PC-3 (cell line): ENCODE measurements at regions of chr7 and their contacts with region 1.

Region 1: GRCh38 chr7:11831736-11832495 is at the start of gene THSD7A:
- DNase-seq: peak; percentile 56
- ATAC-seq: peak; percentile 95
- H3K4me3 ChIP-seq: peak within 1 kb of the TSS; percentile 76
- H3K27ac ChIP-seq: no peak within 1 kb of the TSS
- H3K4me1 ChIP-seq: no peaks in the 10 kb centered on the region
- H3K27me3 ChIP-seq: no peaks in the 10 kb centered on the region
- CTCF ChIP-seq: no peak
- total RNA-seq, gene THSD7A: 0.04 and 0.06 TPM in 2 replicates

Region 2: GRCh38 chr7:11427686-11428273 is 404.1 kb before region 1 on chr7:
- CTCF ChIA-PET with region 1: interaction called, 4 read pairs
- POLR2A ChIA-PET with region 1: no interaction called
- intact Hi-C with region 1: loop called (anchors 1 kb)
- DNase-seq: peak; percentile 74
- ATAC-seq: peak; percentile 62
- H3K4me3 ChIP-seq: no peak overlapping the region
- H3K27ac ChIP-seq: no peak overlapping the region
- H3K4me1 ChIP-seq: no peaks in the 10 kb centered on the region
- H3K27me3 ChIP-seq: no peaks in the 10 kb centered on the region
- CTCF ChIP-seq: peak; percentile 87

Region 3: DNA sequence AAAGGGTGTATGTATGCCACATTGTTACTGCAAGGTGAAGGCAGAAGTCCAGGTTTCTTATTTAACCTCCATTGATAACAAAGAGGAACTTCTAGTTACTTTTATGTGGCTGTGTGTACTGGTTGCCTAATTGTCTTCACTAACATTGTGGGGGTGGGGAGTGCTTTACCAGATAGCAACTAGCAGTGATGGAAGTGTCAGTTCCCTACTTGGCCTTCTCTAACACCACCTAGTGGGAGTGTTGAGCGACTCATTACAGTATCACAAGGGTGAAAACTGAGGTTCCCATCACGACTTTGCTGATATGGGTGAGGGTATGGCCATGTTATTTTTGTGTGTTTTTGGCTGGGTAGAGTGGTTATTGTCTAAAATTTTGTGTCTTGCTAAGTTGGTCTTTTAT is 274.3 kb before region 1 on chr7:
- CTCF ChIA-PET with region 1: no interaction called
- POLR2A ChIA-PET with region 1: no interaction called
- intact Hi-C with region 1: loop called (anchors 5 kb)
- DNase-seq: peak; percentile 48
- ATAC-seq: peak; percentile 96
- H3K4me3 ChIP-seq: no peak overlapping the region
- H3K27ac ChIP-seq: no peak overlapping the region
- H3K4me1 ChIP-seq: no peaks in the 10 kb centered on the region
- H3K27me3 ChIP-seq: no peaks in the 10 kb centered on the region
- CTCF ChIP-seq: peak; percentile 53

Region 4: GRCh38 chr7:11817111-11817740 is 14.7 kb before region 1 on chr7:
- CTCF ChIA-PET with region 1: no interaction called
- POLR2A ChIA-PET with region 1: no interaction called
- intact Hi-C with region 1: no loop called
- DNase-seq: no peak
- ATAC-seq: no peak
- H3K4me3 ChIP-seq: no peak overlapping the region
- H3K27ac ChIP-seq: no peak overlapping the region
- H3K4me1 ChIP-seq: no peaks in the 10 kb centered on the region
- H3K27me3 ChIP-seq: no peaks in the 10 kb centered on the region
- CTCF ChIP-seq: no peak

Region 5: DNA sequence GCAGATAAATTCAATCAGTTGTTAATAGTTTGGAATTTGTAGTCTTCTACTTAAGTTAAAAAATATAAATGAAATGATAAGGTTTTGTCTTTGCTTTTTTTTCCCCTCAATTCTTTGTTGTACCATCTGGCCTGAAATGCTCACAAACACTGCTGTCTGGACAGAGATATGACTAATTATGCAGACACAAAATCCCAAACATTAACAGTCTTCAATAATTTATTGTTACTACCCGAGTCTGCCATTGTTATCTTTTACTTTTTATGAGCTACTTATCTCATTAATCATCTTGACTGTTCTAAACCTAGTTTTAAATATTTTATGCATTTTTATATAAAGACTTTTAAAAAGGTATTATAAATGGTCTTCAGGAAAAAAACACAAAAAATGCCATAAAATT is 64.7 kb after region 1 on chr7:
- CTCF ChIA-PET with region 1: no interaction called
- POLR2A ChIA-PET with region 1: no interaction called
- intact Hi-C with region 1: no loop called
- DNase-seq: no peak
- ATAC-seq: peak; percentile 70
- H3K4me3 ChIP-seq: no peak overlapping the region
- H3K27ac ChIP-seq: no peak overlapping the region
- H3K4me1 ChIP-seq: no peaks in the 10 kb centered on the region
- H3K27me3 ChIP-seq: no peaks in the 10 kb centered on the region
- CTCF ChIP-seq: no peak

Region 6: GRCh38 chr7:12067141-12067831 is 235.4 kb after region 1 on chr7:
- CTCF ChIA-PET with region 1: no interaction called
- POLR2A ChIA-PET with region 1: no interaction called
- intact Hi-C with region 1: loop called (anchors 1 kb)
- DNase-seq: peak; percentile 83
- ATAC-seq: peak; percentile 50
- H3K4me3 ChIP-seq: peak overlapping the region; percentile 58
- H3K27ac ChIP-seq: peak overlapping the region; percentile 100
- H3K4me1 ChIP-seq: peaks cover 29% of the 10 kb centered on the region
- H3K27me3 ChIP-seq: no peaks in the 10 kb centered on the region
- CTCF ChIP-seq: peak; percentile 86

Region 7: DNA sequence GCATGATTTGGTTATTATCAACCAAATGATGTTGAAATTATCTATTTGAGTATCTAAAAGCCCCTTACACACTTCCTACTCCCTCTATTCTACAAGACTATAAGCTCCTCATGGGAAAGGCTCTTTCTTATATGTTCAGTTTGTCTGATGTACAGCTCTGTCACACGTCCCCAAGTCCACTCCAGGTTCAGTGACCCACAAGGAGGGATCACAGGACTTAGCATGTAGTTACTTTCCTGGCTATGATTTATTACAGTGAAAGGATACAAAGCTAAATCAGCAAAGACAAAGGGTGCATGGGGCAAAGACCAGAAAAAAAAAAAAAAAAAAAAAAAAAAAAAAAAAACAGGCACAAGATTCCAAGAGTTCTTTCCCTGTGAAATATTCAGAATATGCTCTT is 253.6 kb after region 1 on chr7:
- CTCF ChIA-PET with region 1: no interaction called
- POLR2A ChIA-PET with region 1: no interaction called
- intact Hi-C with region 1: no loop called
- DNase-seq: no peak
- ATAC-seq: no peak
- H3K4me3 ChIP-seq: no peak overlapping the region
- H3K27ac ChIP-seq: no peak overlapping the region
- H3K4me1 ChIP-seq: no peaks in the 10 kb centered on the region
- H3K27me3 ChIP-seq: no peaks in the 10 kb centered on the region
- CTCF ChIP-seq: no peak

Region 8: DNA sequence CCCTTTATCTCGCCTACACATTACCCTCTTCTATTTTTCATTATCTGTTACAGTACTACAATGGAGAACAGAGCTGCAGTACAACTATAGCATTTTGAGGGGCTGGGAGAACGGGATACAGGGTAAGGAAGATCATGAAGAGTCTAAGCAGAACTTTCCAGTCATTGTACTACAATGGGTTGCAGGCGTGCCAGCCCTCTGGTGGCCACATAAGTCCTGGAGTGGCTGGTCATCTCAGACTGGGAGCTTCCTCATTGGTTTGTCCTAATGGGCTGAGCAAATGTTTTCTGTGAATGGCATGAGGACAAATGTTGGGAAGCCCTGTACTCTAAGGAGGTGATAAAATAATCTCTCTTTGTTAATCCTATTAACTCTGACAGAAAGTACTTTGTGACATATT is 412.2 kb after region 1 on chr7:
- CTCF ChIA-PET with region 1: no interaction called
- POLR2A ChIA-PET with region 1: no interaction called
- intact Hi-C with region 1: loop called (anchors 10 kb)
- DNase-seq: peak; percentile 59
- ATAC-seq: peak; percentile 83
- H3K4me3 ChIP-seq: no peak overlapping the region
- H3K27ac ChIP-seq: no peak overlapping the region
- H3K4me1 ChIP-seq: peaks cover 11% of the 10 kb centered on the region
- H3K27me3 ChIP-seq: no peaks in the 10 kb centered on the region
- CTCF ChIP-seq: peak; percentile 74

Region 9: DNA sequence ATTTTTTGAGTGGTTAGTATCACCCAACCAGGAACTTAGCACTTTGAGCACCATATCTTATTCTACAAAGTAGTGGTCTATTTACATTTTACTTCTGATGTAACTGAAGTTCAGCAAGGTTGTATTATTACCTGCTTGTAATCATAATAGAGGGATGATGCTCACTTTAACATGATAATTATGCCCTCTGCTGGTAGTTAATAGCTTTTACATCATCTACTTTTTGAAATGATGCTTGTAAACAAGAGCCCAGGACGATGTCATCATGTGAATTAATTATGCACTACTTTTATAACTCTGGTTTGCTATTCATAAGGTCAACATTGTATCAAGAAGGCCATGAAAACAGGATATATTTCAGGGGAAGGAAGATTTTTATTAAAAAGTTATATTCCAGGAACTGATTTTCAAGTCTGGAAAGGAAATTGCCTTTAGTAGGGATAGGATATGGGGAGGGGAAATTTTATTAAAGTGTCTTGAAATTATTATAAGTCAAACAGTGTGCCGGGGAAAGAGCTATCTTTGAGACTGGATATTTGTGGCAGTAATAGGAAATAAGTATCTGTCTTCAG is 658.3 kb after region 1 on chr7:
- CTCF ChIA-PET with region 1: interaction called, 3 read pairs
- POLR2A ChIA-PET with region 1: no interaction called
- intact Hi-C with region 1: loop called (anchors 2 kb)
- DNase-seq: peak; percentile 66
- ATAC-seq: peak; percentile 21; the same call in 1 of the 2 replicates
- H3K4me3 ChIP-seq: no peak overlapping the region
- H3K27ac ChIP-seq: no peak overlapping the region
- H3K4me1 ChIP-seq: peaks cover 41% of the 10 kb centered on the region
- H3K27me3 ChIP-seq: no peaks in the 10 kb centered on the region
- CTCF ChIP-seq: peak; percentile 77